ENCODE measurements at regions of chr17 and their contacts with region 1.

Region 1: DNA sequence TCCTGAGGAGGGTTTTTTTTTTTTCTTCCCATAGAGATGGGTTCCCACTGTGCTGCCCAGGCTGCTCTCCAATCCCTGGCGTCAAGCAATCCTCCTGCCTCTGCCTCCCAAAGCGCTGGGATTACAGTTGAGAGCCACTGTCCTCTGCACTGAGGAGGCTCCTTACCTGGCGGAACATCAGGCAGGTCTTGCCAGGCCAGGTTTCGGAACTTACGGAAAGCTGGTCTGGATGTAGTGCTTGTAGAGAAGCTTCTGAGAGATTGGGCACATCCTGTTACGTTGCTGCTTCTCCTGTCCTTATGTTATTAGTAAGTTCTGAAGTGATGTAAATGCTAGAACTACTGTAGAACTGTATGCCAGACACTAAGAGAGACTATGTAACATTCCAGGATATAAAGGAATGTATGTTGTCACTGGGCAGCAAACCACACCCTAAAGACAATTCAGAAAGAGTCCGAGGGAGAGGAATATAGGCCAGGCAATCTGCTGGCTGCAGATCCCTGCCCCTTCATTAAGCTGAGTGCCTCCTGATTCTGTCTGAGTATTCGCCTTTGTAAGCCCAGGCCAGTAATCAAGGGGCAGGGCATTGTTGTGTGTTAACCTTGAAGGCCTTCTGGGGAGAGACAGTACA is 21.1 kb downstream of the ETV4 start:
- DNase-seq: no peak
- ATAC-seq: no peak

Region 2: GRCh38 chr17:43562679-43563599 is 37.9 kb after region 1 on chr17:
- intact Hi-C with region 1: loop called in 1 of 2 experiments (anchors 5 kb)
- DNase-seq: peak; percentile 33
- ATAC-seq: peak in 1 of 2 donors; percentile 19

Measured in left cardiac atrium (tissue), 4 donors.